ENCODE measurements at regions of chr6 and their contacts with region 1.

Region 1: DNA sequence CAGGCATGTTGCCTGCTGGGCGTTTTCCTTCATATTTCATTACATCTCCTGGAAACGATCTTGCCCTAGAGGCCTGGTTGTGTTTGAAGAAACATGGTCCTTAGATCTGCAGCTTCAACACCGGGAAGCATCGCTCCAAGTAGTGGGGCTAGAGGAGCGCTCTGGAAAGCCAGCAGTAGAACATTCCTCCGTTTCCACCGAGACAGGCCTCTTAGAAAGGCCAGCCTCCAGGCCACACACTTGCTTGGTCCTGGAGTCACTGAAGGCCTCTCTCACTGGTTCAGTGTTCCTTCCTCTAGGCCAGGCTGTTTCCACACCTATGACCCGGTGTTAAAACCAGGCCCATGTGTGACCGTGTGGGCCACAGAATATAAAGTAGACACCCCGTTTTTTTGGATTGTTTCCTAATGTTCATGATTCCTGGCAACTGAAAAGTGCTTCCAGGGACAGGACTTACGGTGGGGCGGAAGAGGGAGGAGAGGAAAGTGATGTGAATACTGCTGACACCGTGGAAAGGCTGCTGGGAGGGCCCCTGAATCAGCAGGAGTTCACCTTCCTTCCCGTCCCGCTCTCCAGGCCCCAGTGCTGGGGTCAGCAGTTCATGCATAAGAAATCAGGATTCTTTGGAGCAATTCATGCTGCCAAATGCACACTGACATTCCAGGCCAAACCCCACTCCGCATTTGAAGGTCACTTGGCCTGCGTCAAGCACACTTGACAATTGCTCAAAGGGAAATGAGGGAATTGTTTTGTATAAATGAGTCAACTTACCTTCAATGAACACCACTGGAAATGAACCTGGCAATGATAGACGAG is 83.8 kb downstream of the IYD start:
- DNase-seq: no peak
- ATAC-seq: peak; percentile 75
- H3K4me3 ChIP-seq: no peak overlapping the region
- H3K27ac ChIP-seq: no peak overlapping the region
- H3K4me1 ChIP-seq: no peaks in the 10 kb centered on the region
- H3K27me3 ChIP-seq: no peaks in the 10 kb centered on the region

Region 2: DNA sequence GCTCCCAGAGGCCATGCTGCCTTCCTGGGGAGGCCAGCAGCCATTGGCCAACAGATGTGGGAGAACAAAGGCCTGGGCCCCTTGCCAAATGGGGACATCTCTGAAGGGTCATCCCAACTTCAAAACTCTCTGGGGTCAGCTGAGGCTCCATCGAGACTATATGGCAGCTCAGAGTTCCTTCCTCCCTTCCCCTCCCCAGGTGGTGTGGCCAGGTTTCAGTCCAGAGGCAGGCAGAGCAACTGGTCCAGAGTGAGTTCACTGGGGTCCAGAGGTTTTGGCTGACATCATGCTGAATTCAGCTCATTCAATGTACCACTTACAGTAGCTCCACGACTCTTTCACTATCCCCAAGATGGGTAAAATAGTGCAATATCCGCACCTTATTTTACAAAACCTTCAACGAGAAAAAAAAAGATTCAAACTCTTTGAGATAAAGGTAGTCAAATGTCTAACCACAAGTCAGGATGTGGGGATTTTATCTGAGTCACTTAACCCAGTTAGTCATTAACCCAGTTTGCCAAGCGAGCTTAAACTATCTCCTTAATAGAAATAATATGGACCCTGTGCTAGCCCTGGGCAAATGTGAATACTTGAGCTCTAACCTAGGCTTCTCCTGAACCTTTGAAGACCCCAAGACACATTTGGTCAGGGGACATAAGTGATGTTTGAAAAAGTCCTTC is 38.6 kb after region 1 on chr6:
- intact Hi-C with region 1: loop called in 1 of 2 experiments (anchors 2 kb)
- DNase-seq: no peak
- ATAC-seq: no peak
- H3K4me3 ChIP-seq: no peak overlapping the region
- H3K27ac ChIP-seq: no peak overlapping the region
- H3K4me1 ChIP-seq: no peaks in the 10 kb centered on the region
- H3K27me3 ChIP-seq: no peaks in the 10 kb centered on the region